Endothelial cell of umbilical vein (primary cell): ENCODE measurements at regions of chr6 and their contacts with region 1.

Region 1: GRCh38 chr6:27177485-27178406 is 69.8 kb upstream of the PRSS16 start:
- DNase-seq: peak; percentile 88
- H3K4me3 ChIP-seq: peak overlapping the region; percentile 34 to 94 (median 77)
- H3K27ac ChIP-seq: peak overlapping the region; percentile 41
- H3K4me1 ChIP-seq: no peaks in the 10 kb centered on the region
- H3K27me3 ChIP-seq: peaks cover 8 to 18% of the 10 kb centered on the region in 2 experiments
- CTCF ChIP-seq: peak; percentile 45 to 60
- POLR2A ChIP-seq: no peak

Region 2: DNA sequence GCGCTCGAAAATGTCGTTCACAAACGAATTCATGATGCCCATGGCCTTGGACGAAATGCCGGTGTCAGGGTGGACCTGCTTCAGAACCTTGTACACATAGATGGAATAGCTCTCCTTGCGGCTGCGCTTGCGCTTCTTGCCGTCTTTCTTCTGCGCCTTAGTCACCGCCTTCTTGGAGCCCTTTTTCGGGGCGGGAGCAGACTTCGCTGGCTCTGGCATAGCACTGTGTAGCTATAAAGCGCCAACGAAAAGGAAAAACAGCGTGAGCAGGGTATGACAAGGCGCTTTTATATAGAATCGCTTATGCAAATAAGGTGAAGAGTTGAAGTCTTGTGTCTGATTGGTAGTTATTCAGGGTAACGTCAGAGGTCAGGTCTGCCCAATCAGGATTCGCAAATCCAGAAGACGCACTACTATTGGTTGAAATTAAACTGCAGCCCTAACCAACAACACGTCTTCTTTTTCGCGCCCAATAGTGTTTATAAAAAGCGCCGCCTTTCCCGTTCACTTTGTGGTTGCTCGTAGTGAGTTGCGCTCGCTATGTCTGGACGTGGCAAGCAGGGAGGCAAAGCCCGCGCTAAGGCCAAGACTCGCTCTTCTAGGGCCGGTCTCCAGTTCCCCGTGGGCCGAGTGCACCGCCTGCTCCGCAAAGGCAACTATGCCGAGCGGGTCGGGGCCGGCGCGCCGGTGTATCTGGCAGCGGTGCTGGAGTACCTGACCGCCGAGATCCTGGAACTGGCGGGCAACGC is 45.0 kb before region 1 on chr6:
- CTCF ChIA-PET with region 1: no interaction called
- POLR2A ChIA-PET with region 1: interaction called, 4 read pairs
- dilution Hi-C with region 1: no loop called
- intact Hi-C with region 1: loop called (anchors 2 kb)
- DNase-seq: peak; percentile 100
- H3K4me3 ChIP-seq: peak overlapping the region; percentile 37 to 81 (median 59)
- H3K27ac ChIP-seq: peak overlapping the region; percentile 86
- H3K4me1 ChIP-seq: peaks cover 19% of the 10 kb centered on the region
- H3K27me3 ChIP-seq: no peaks in the 10 kb centered on the region
- CTCF ChIP-seq: no peak
- POLR2A ChIP-seq: peak; percentile 76

Region 3: GRCh38 chr6:27188885-27189418 is 11.2 kb after region 1 on chr6:
- CTCF ChIA-PET with region 1: interaction called, 22 read pairs
- POLR2A ChIA-PET with region 1: no interaction called
- dilution Hi-C with region 1: no loop called
- intact Hi-C with region 1: loop called (anchors 1 kb)
- DNase-seq: peak; percentile 83
- H3K4me3 ChIP-seq: peak overlapping the region; percentile 59 to 80 (median 66)
- H3K27ac ChIP-seq: peak overlapping the region; percentile 37
- H3K4me1 ChIP-seq: no peaks in the 10 kb centered on the region
- H3K27me3 ChIP-seq: peaks cover 0 to 4% of the 10 kb centered on the region in 2 experiments
- CTCF ChIP-seq: peak; percentile 54 to 55
- POLR2A ChIP-seq: no peak

Region 4: GRCh38 chr6:27370391-27370790 is 192.6 kb after region 1 on chr6:
- CTCF ChIA-PET with region 1: no interaction called
- POLR2A ChIA-PET with region 1: no interaction called
- dilution Hi-C with region 1: no loop called
- intact Hi-C with region 1: no loop called
- DNase-seq: no peak
- H3K4me3 ChIP-seq: no peak overlapping the region
- H3K27ac ChIP-seq: no peak overlapping the region
- H3K4me1 ChIP-seq: no peaks in the 10 kb centered on the region
- H3K27me3 ChIP-seq: peaks cover 6 to 14% of the 10 kb centered on the region in 2 experiments
- CTCF ChIP-seq: no peak
- POLR2A ChIP-seq: no peak

Region 5: DNA sequence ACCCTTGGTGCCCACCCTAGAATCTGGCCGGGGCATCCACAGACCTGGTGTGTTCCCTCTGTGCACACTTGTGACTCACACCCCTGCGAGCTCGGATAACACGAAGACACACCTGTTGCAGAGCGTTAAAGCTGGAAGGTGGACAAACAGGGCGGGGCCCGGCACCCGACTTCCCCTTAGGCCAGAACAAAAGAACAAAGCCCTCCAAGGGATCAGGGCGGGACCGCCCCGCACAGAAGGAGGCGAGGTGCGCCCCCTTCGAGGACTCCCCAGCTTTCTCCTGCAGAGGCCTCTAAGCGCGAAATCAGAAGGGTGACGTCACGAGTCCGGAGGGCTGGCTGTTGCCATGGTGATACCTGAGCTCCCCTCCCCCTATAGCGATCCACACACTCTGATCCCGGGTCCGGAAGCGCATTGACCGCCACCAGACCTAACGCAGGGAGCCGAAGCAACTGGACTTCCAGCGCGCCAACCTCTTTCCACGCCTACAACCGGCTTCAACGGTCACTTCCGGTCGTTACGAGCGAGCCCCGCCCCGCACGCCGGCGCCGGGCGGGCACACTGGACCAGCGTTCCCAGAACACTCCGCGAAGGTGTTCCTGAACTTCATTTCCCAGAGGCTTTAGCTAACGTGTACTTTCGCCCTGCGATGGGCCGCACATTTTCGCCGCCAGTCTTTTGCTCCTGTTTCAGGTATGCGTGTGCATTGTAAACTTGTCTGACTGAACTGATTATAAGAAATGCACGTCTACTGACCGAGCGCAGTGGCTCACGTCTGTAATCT is 295.1 kb after region 1 on chr6 and contains the start of gene ZNF184:
- CTCF ChIA-PET with region 1: interaction called, 3 read pairs
- POLR2A ChIA-PET with region 1: no interaction called
- dilution Hi-C with region 1: no loop called
- intact Hi-C with region 1: loop called (anchors 1 kb)
- DNase-seq: peak; percentile 98
- H3K4me3 ChIP-seq: peak within 1 kb of the TSS; percentile 68 to 94 (median 82)
- H3K27ac ChIP-seq: peak within 1 kb of the TSS; percentile 74
- H3K4me1 ChIP-seq: peaks cover 9% of the 10 kb centered on the region
- H3K27me3 ChIP-seq: peaks cover 9 to 14% of the 10 kb centered on the region in 2 experiments
- CTCF ChIP-seq: no peak
- POLR2A ChIP-seq: peak; percentile 84
- total RNA-seq, gene ZNF184: 5.4 and 6.5 TPM in 2 replicates

Region 6: DNA sequence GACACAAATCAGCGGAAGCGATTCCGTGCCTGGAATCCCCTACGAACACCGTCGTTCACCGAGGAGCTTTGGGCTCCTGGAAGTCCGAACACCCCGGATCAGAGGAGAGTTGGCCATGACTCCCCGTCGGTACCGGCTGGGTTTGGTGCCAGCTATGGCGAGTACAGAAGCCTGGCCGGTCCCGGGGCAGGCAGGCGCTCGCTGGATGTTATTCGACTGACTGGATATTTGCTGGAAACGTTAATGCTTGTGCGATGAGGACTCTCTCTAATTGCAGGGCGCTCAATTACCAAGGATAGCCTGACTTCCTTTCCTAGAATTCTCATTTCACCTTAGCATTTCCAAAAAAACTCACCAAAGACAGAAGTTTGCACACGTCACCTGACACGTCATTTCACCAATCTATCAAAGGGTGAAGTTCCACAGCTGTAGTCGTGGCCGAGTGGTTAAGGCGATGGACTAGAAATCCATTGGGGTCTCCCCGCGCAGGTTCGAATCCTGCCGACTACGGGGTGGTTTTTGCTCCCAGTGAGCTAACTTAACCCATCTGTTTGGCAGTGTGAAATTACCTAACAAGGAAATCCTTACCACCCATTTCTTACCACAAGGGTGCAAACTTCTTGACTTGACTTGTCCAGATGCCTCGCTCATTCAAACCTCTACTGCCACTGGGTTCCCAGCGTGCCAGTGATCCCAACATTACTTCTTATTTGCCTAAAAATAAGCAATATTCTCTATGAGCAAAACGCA is 317.8 kb after region 1 on chr6:
- CTCF ChIA-PET with region 1: no interaction called
- POLR2A ChIA-PET with region 1: no interaction called
- dilution Hi-C with region 1: no loop called
- intact Hi-C with region 1: loop called (anchors 1 kb)
- DNase-seq: peak; percentile 58
- H3K4me3 ChIP-seq: peak overlapping the region; percentile 44 to 84 (median 82)
- H3K27ac ChIP-seq: no peak overlapping the region
- H3K4me1 ChIP-seq: peaks cover 7% of the 10 kb centered on the region
- H3K27me3 ChIP-seq: peaks cover 11 to 23% of the 10 kb centered on the region in 2 experiments
- CTCF ChIP-seq: peak in 1 of 2 donors; percentile 5
- POLR2A ChIP-seq: no peak

Region 7: GRCh38 chr6:27672113-27672799 is 494.5 kb after region 1 on chr6:
- CTCF ChIA-PET with region 1: no interaction called
- POLR2A ChIA-PET with region 1: no interaction called
- dilution Hi-C with region 1: no loop called
- intact Hi-C with region 1: loop called (anchors 5 kb)
- DNase-seq: peak; percentile 40
- H3K4me3 ChIP-seq: no peak overlapping the region
- H3K27ac ChIP-seq: no peak overlapping the region
- H3K4me1 ChIP-seq: peaks cover 10% of the 10 kb centered on the region
- H3K27me3 ChIP-seq: peaks cover 7 to 11% of the 10 kb centered on the region in 2 experiments
- CTCF ChIP-seq: no peak
- POLR2A ChIP-seq: no peak

Region 8: DNA sequence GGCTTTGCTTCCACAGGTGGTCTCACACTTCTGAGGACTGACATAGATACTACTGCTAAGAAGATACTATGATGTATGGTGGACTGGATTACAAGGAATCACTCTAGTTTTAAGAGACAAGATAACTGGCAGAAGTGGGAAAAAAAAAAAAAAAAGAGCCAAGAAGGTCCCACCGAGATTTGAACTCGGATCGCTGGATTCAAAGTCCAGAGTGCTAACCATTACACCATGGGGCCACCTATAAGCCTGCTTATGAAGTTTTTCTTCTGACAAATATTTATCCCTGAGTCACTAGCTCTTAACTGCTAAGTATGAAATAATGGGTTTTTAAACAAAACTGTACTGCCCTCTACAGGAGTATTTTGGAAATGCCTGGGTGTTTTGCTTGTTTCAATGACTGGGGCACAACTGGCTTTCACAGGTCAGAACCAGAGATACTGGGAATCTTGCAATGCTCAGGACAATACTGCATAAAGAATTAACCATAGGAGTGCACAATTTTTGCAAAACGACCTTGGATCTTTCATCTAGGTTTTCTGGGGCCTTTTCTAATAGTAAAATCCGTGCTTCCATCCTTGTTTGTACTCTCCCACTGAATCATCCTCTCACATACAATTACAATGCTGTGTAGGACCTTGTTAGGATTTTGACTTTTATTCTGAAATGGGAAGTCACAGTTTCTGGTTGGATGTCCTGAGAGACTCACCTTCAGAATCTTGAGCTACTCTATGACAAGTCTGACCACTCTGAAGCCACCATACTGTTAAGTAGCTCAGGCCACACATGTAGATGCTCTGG is 618.1 kb after region 1 on chr6:
- CTCF ChIA-PET with region 1: interaction called, 15 read pairs
- POLR2A ChIA-PET with region 1: no interaction called
- dilution Hi-C with region 1: no loop called
- intact Hi-C with region 1: loop called (anchors 1 kb)
- DNase-seq: peak; percentile 95
- H3K4me3 ChIP-seq: no peak overlapping the region
- H3K27ac ChIP-seq: no peak overlapping the region
- H3K4me1 ChIP-seq: peaks cover 7% of the 10 kb centered on the region
- H3K27me3 ChIP-seq: no peaks in the 10 kb centered on the region
- CTCF ChIP-seq: peak; percentile 60 to 69
- POLR2A ChIP-seq: no peak